CD8-positive, alpha-beta T cell (primary cell): ENCODE measurements at regions of chr9 and their contacts with region 1.

Region 1: DNA sequence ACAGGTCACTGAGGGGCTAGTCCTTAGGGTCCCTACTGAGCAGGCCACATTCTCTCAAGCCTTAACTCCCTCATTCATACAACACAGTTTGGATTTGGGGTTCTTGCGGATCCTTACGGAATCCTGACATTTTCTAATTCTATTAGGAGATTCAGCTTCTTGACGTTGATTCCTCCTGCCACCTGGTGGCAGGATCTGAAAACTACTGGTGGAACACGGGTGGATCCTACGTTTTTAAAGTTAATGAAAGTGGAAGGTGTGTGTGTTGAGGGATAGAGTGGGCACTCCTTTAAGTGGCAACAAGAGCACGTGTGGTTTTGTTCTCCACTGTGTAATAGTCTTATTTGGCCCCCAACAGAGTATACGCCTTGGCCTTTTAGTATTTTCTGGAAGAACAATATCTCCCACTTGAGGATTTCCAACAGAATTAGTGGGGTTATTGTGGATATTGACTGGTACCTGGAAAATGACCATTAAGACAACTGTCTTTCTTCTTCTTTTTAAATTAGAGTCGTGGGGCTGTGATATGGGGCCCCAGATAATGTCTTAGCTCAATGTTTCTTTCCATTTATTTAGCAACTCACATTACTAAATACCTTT is 25.2 kb downstream of the SLC28A3 start:
- DNase-seq: peak; percentile 13 to 69 (median 46)
- ATAC-seq: no peak
- H3K4me3 ChIP-seq: no peak overlapping the region
- H3K4me3 Mint-ChIP-seq: no peak overlapping the region
- H3K27ac ChIP-seq: no peak overlapping the region
- H3K27ac Mint-ChIP-seq: no peak overlapping the region
- H3K4me1 ChIP-seq: no peaks in the 10 kb centered on the region
- H3K4me1 Mint-ChIP-seq: no peaks in the 10 kb centered on the region
- H3K27me3 ChIP-seq: no peaks in the 10 kb centered on the region
- H3K27me3 Mint-ChIP-seq: peaks cover 2% of the 10 kb centered on the region
- CTCF ChIP-seq: peak; percentile 76

Region 2: GRCh38 chr9:83622939-83623678 is 692.3 kb before region 1 on chr9 and contains the start of gene IDNK:
- CTCF ChIA-PET with region 1: no interaction called
- POLR2A ChIA-PET with region 1: no interaction called
- intact Hi-C with region 1: no loop called
- DNase-seq: peak; percentile 21 to 82 (median 59)
- ATAC-seq: peak; percentile 88
- H3K4me3 ChIP-seq: peak within 1 kb of the TSS; percentile 67 to 74
- H3K4me3 Mint-ChIP-seq: peak within 1 kb of the TSS; percentile 92
- H3K27ac ChIP-seq: peak within 1 kb of the TSS; percentile 78 to 82
- H3K27ac Mint-ChIP-seq: peak within 1 kb of the TSS; percentile 98
- H3K4me1 ChIP-seq: peaks cover 19% of the 10 kb centered on the region
- H3K4me1 Mint-ChIP-seq: peaks cover 33% of the 10 kb centered on the region
- H3K27me3 ChIP-seq: no peaks in the 10 kb centered on the region
- H3K27me3 Mint-ChIP-seq: no peaks in the 10 kb centered on the region
- CTCF ChIP-seq: no peak
- total RNA-seq, gene IDNK: 4.3 to 4.6 TPM

Region 3: DNA sequence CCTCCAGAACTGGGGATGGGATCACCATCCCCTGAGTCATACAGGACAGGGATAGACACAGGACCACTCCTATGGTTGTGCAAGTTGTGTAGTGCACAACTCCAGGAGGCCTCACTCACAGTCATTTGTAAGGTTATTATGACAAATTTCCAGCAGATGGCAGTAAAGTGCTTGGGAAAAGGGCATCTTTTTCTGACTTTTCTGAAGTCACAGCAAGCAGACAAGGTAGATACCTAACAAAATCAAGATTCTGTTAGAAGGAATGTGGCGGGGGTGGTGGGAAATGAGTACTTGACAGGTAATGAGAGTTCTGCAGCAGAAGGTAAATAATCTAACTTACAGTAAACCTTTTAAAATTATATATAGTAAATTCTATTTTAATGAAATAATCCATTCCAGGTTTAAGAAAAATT is 377.5 kb before region 1 on chr9:
- CTCF ChIA-PET with region 1: interaction called, 13 read pairs
- POLR2A ChIA-PET with region 1: no interaction called
- intact Hi-C with region 1: loop called (anchors 1 kb)
- DNase-seq: peak in 6 of 9 experiments; percentile 4 to 78 (median 40)
- ATAC-seq: peak; percentile 77
- H3K4me3 ChIP-seq: no peak overlapping the region
- H3K4me3 Mint-ChIP-seq: no peak overlapping the region
- H3K27ac ChIP-seq: no peak overlapping the region
- H3K27ac Mint-ChIP-seq: no peak overlapping the region
- H3K4me1 ChIP-seq: no peaks in the 10 kb centered on the region
- H3K4me1 Mint-ChIP-seq: peaks cover 2% of the 10 kb centered on the region
- H3K27me3 ChIP-seq: no peaks in the 10 kb centered on the region
- H3K27me3 Mint-ChIP-seq: no peaks in the 10 kb centered on the region
- CTCF ChIP-seq: peak; percentile 80

Region 4: GRCh38 chr9:84002344-84002743 is 313.0 kb before region 1 on chr9:
- CTCF ChIA-PET with region 1: no interaction called
- POLR2A ChIA-PET with region 1: no interaction called
- intact Hi-C with region 1: loop called in 1 of 2 experiments (anchors 10 kb)
- DNase-seq: peak in 1 of 9 experiments; percentile 41
- ATAC-seq: no peak
- H3K4me3 ChIP-seq: no peak overlapping the region
- H3K4me3 Mint-ChIP-seq: no peak overlapping the region
- H3K27ac ChIP-seq: peak overlapping the region in 1 of 2 experiments; percentile 11
- H3K27ac Mint-ChIP-seq: peak overlapping the region; percentile 27
- H3K4me1 ChIP-seq: no peaks in the 10 kb centered on the region
- H3K4me1 Mint-ChIP-seq: peaks cover 13% of the 10 kb centered on the region
- H3K27me3 ChIP-seq: no peaks in the 10 kb centered on the region
- H3K27me3 Mint-ChIP-seq: no peaks in the 10 kb centered on the region
- CTCF ChIP-seq: no peak

Region 5: GRCh38 chr9:84170521-84171141 is 144.7 kb before region 1 on chr9:
- CTCF ChIA-PET with region 1: interaction called, 4 read pairs
- POLR2A ChIA-PET with region 1: no interaction called
- intact Hi-C with region 1: loop called in 1 of 2 experiments (anchors 5 kb)
- DNase-seq: peak in 1 of 9 experiments; percentile 17
- ATAC-seq: no peak
- H3K4me3 ChIP-seq: no peak overlapping the region
- H3K4me3 Mint-ChIP-seq: no peak overlapping the region
- H3K27ac ChIP-seq: no peak overlapping the region
- H3K27ac Mint-ChIP-seq: no peak overlapping the region
- H3K4me1 ChIP-seq: no peaks in the 10 kb centered on the region
- H3K4me1 Mint-ChIP-seq: no peaks in the 10 kb centered on the region
- H3K27me3 ChIP-seq: no peaks in the 10 kb centered on the region
- H3K27me3 Mint-ChIP-seq: no peaks in the 10 kb centered on the region
- CTCF ChIP-seq: no peak

Region 6: DNA sequence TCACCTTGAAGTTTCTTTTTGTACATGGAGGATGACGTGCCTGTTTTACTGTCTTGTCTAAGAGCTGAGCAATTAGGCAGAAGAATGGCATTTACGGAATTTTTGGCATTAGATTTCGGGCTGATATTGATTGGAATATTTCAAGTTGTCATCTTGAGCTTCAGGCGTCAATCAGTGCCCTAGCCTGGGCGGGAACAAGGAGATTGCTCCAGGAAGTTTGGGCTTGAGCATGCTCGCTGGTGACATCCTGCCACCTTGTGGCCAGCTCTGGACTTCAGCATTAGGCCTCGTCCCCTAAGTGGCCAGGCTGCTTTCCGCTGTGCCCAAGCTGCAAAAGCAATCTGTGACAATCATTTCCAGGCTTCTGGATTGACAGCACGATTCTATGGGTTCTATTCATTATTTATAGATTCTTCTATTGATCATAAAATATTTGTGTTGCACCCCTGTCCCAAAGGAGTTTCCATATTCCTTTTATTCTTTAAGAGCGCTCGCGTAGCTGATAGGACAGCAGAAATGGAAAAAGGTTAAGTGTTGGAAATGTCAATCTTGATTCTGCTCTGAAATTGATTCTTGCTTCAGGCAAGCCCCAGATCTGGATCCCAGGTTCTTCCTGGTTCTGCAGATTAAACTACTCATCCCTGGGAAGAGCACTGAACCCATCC is 54.2 kb before region 1 on chr9:
- CTCF ChIA-PET with region 1: interaction called, 8 read pairs
- POLR2A ChIA-PET with region 1: no interaction called
- intact Hi-C with region 1: loop called in 1 of 2 experiments (anchors 1 kb)
- DNase-seq: peak in 8 of 9 experiments; percentile 17 to 63 (median 48)
- ATAC-seq: no peak
- H3K4me3 ChIP-seq: no peak overlapping the region
- H3K4me3 Mint-ChIP-seq: peak overlapping the region; percentile 43
- H3K27ac ChIP-seq: no peak overlapping the region
- H3K27ac Mint-ChIP-seq: no peak overlapping the region
- H3K4me1 ChIP-seq: no peaks in the 10 kb centered on the region
- H3K4me1 Mint-ChIP-seq: peaks cover 6% of the 10 kb centered on the region
- H3K27me3 ChIP-seq: no peaks in the 10 kb centered on the region
- H3K27me3 Mint-ChIP-seq: peaks cover 3% of the 10 kb centered on the region
- CTCF ChIP-seq: peak; percentile 57

Region 7: DNA sequence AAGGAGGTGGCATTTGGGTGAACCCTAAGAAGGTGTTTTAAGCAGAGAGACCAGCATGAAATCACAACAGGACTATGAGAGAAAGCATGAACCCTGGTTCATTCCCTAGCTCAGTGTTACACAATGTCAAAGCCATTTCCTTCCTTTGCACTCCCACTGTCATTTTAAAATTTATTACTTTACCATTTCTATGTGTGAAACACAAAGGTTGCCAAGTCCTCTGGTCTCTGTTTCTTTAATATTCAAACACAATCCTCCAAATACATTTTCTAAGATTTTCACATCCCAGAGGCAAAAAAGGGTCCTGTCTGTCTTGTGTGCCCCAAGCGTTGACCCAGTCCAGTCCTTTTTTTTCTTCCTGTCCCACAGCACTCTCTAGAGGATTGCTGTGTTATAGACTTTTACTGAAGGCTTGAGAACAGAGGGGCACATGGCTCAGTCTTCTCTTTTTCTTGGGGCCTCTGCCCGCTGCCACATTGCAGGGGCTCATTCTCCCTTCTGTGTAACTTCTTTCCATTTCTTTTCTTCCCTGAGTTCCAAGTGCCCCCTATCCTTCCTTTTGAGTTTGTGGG is 103.7 kb after region 1 on chr9:
- CTCF ChIA-PET with region 1: no interaction called
- POLR2A ChIA-PET with region 1: no interaction called
- intact Hi-C with region 1: no loop called
- DNase-seq: no peak
- ATAC-seq: no peak
- H3K4me3 ChIP-seq: no peak overlapping the region
- H3K4me3 Mint-ChIP-seq: no peak overlapping the region
- H3K27ac ChIP-seq: no peak overlapping the region
- H3K27ac Mint-ChIP-seq: no peak overlapping the region
- H3K4me1 ChIP-seq: no peaks in the 10 kb centered on the region
- H3K4me1 Mint-ChIP-seq: no peaks in the 10 kb centered on the region
- H3K27me3 ChIP-seq: no peaks in the 10 kb centered on the region
- H3K27me3 Mint-ChIP-seq: no peaks in the 10 kb centered on the region
- CTCF ChIP-seq: no peak